ENCODE measurements at regions of chr11 and their contacts with region 1.

Region 1: DNA sequence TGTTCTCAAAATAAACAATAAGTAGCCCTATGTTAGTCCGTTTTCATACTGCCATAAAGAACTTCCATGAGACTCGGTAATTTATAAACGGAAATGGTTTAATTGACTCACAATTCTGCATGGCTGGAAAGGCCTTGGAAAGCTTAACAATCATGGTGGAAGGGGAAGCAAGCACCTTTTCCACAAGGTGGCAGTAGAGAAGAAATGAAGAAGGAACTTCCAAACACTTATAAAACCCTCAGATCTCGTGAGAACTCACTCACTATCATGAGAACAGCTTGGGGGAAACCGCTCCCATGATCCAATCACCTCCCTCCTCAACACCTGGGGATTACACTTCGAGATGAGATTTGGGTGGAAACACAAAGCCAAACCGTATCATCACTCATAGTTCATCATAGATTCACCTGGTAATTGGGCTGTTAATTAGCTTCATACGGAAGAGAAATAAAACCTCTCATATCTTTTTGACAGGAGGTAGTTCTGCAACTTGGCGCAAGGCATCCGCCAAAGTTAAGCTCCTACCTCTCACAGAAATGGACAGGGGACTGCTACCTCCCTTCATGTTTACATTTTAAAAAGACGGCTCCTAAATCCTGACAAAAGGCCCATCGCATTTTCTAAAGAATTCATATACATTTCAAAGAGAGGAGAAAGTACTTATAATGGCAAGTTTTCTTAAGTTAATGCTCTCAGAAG is 49.0 kb downstream of the MUC15 start:
- ATAC-seq: no peak
- H3K4me3 ChIP-seq: no peak overlapping the region
- H3K27ac ChIP-seq: no peak overlapping the region
- H3K4me1 ChIP-seq: no peaks in the 10 kb centered on the region

Region 2: DNA sequence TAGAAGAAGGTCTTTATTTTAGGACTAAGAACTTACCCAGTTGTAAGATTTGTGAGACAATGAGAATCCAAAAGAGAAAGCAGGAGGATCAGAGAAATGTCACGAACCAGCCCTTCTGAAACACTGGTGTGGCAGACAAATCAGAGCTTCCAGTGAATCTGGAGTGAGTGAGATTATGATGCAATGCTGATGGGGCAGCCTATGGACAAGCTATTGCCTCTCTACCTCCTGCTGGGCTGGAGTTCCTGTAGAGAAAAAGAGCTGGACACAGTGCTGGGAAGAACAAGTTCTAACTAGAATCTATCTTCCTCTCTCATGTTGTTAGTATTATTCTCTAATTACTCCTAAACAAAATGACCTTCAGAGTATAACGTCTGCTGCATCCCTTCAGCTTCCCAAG is 203.2 kb before region 1 on chr11:
- in situ Hi-C with region 1: no loop called
- ATAC-seq: peak in 7 of 8 experiments; percentile 61 to 95 (median 80)
- H3K4me3 ChIP-seq: no peak overlapping the region
- H3K27ac ChIP-seq: peak overlapping the region in 1 of 2 donors; percentile 6
- H3K4me1 ChIP-seq: peaks cover 6% of the 10 kb centered on the region in 2 donors

Region 3: DNA sequence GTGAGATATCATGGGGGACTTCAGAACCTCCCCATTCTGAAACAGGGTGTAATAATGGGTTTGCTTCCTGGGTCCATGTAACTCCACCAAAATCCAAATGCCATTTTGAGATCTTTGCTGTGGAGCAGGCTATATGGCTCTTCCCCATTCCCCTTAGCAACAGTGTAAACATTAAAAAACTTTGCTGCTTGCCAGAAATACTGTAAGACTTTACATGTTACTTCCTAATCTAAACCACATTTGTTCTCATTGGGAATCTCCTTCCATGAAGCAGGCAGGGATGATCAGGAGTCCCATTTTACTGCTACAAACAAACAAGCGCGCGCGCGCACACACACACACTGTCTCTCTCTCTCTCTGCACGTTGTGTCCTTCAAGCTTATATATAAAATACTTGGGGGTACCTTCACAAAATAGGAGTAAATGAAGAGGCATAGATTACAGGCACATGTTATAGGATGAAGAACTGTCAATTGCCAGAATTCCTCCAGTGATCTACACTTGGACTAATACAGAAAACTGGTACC is 104.6 kb before region 1 on chr11:
- in situ Hi-C with region 1: loop called in 1 of 9 experiments (anchors 25 kb)
- ATAC-seq: peak in 1 of 8 experiments; percentile 26
- H3K4me3 ChIP-seq: no peak overlapping the region
- H3K27ac ChIP-seq: no peak overlapping the region
- H3K4me1 ChIP-seq: no peaks in the 10 kb centered on the region

Region 4: DNA sequence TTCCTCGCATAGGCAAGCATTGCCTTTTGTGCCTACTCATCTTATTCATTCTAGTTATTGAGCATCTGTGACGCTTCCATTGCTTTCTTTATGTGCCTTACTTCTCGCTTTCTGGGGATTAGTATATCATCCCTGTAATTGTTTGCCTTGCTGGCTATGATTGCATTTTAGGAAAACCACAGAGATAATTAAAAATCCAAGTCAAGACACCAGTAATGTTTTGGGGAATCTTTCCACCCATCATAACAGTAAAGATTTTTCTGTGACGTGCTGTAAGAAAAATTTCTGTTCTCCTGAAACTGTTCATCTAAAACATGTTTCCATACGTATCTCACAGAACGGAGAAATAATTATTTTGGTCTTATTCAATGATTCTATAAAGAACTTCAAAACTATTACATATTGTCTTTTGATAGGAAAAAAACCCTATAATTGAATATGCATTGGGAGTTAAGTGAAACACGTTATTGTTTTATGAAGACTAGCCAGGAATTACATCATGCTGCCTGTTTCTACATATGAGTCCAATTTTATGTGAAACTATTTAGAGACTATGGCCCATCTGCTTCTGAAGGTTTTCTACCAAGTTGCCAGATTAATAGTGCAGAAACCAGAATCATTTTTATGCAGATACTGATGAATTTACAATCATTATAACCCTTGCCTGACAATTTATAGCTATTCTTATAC is 337.2 kb after region 1 on chr11:
- in situ Hi-C with region 1: no loop called
- ATAC-seq: no peak
- H3K4me3 ChIP-seq: no peak overlapping the region
- H3K27ac ChIP-seq: no peak overlapping the region
- H3K4me1 ChIP-seq: peaks cover 5 to 18% of the 10 kb centered on the region in 2 donors

Region 5: DNA sequence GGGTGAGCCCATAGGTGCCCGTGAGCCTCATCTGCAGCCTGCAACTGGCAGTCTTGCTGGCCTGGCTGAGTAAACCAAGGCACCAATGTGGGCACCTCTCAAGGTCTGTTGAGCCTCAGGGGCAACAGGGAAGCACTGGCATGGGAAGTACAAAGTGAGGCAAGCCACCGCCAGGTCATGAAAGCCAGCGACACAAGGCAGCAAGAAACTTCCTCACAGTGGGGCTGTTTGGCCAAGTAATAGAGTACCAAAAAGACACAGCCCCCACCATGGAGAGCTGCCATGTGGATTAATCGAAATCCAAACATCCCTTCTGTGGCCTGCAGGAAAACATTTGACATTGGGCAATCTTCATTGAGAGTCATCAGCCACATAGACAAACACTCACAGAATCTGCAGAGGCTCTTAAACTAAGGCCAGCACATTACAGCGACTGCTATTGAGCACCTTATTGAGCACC is 427.2 kb after region 1 on chr11:
- in situ Hi-C with region 1: no loop called
- ATAC-seq: no peak
- H3K4me3 ChIP-seq: no peak overlapping the region
- H3K27ac ChIP-seq: no peak overlapping the region
- H3K4me1 ChIP-seq: peaks cover 0 to 10% of the 10 kb centered on the region in 2 donors

Measured in motor neuron (in vitro differentiated cells).